CD4-positive, alpha-beta T cell (primary cell): ENCODE measurements at regions of chr2 and their contacts with region 1.

Region 1: DNA sequence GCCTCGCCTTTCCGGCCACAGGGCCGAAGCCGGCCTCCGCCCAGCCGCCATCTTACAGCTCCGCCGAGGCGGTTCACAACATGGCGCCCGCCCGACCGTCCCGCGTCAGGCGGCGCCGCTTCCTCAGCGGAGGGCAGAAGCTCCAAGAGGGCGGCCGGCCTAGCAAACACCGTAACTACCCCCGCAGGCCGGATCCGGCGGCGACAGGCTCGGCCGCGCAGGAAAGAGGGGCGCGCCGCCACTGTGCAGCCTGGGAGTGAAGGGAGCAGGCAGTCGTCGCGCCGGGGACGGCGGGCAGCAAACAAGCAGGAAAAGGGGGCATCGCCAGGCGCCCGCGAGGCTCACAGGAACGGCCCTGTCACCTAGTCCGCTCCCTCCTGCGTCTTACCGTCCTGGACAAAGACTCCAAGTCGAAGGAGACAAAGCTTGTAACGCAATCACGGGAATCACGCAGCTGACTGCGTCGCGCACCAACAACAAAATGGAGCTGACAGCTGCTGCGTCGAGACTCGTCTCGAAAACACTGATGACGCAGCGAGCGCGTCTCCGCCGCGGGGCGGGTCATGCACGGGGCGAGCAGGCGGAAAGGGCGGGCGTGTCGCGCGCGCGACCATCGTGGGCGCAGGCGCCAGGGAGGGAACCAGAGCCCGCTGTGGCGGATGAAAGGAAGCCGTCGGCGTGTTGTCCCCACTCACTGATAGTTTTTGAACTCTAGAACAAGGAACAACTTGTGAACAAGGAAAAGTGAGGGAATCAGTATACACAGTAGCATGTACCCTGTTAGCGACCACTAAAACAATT is at the start of gene CLK1:
- DNase-seq: peak; percentile 95 to 98 (median 97)
- ATAC-seq: peak; percentile 75
- H3K4me3 ChIP-seq: peak within 1 kb of the TSS; percentile 96
- H3K4me3 Mint-ChIP-seq: peak within 1 kb of the TSS; percentile 97
- H3K27ac ChIP-seq: peak within 1 kb of the TSS; percentile 100
- H3K27ac Mint-ChIP-seq: peak within 1 kb of the TSS; percentile 88
- H3K4me1 ChIP-seq: peaks cover 26% of the 10 kb centered on the region
- H3K4me1 Mint-ChIP-seq: peaks cover 48% of the 10 kb centered on the region
- H3K27me3 ChIP-seq: no peaks in the 10 kb centered on the region
- H3K27me3 Mint-ChIP-seq: peaks cover 4% of the 10 kb centered on the region
- CTCF ChIP-seq: no peak
- total RNA-seq, gene CLK1: 1,228 to 1,235 TPM

Region 2: GRCh38 chr2:200850512-200851256 is 13.7 kb before region 1 on chr2:
- CTCF ChIA-PET with region 1: interaction called, 5 read pairs
- POLR2A ChIA-PET with region 1: interaction called, 35 read pairs
- intact Hi-C with region 1: no loop called
- DNase-seq: no peak
- ATAC-seq: no peak
- H3K4me3 ChIP-seq: no peak overlapping the region
- H3K4me3 Mint-ChIP-seq: peak overlapping the region; percentile 20
- H3K27ac ChIP-seq: no peak overlapping the region
- H3K27ac Mint-ChIP-seq: peak overlapping the region; percentile 65
- H3K4me1 ChIP-seq: no peaks in the 10 kb centered on the region
- H3K4me1 Mint-ChIP-seq: peaks cover 21% of the 10 kb centered on the region
- H3K27me3 ChIP-seq: no peaks in the 10 kb centered on the region
- H3K27me3 Mint-ChIP-seq: no peaks in the 10 kb centered on the region
- CTCF ChIP-seq: no peak

Region 3: DNA sequence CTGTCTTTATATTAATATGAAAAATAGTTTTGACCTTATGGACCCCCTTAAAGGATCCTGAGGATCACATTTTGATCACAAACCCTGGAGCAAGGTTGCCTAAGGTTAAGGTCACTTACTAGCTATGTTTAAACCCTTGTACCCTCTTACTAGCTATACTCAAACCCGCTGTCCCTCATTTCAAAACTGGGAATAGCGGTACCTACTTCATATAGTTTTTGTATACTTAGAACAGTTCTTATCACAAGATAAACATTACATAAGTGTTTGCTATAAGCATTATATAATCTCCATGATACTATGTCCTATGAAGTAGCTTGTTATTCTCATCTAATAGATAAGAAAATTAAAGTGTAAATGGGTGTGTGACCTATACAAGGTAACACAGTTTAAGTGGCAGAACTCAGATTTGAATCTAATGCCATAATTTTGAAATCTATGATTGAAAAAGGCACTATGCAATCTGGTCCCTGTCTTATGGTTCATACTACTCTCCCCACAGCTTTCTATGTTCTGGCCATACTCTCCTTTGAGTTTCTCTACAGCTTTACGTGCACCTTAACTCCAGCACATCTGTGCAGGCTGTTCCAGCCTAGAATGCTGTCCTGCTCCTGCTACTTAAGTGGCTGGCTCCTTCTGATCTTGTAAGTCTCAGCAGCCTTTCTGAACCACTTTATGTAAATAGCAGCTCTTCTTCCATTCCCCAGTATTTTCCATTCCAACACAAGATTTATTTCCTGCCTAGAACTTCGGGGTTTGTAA is 176.7 kb after region 1 on chr2:
- CTCF ChIA-PET with region 1: no interaction called
- POLR2A ChIA-PET with region 1: no interaction called
- intact Hi-C with region 1: no loop called
- DNase-seq: no peak
- ATAC-seq: no peak
- H3K4me3 ChIP-seq: no peak overlapping the region
- H3K4me3 Mint-ChIP-seq: no peak overlapping the region
- H3K27ac ChIP-seq: no peak overlapping the region
- H3K27ac Mint-ChIP-seq: no peak overlapping the region
- H3K4me1 ChIP-seq: no peaks in the 10 kb centered on the region
- H3K4me1 Mint-ChIP-seq: peaks cover 10% of the 10 kb centered on the region
- H3K27me3 ChIP-seq: no peaks in the 10 kb centered on the region
- H3K27me3 Mint-ChIP-seq: no peaks in the 10 kb centered on the region
- CTCF ChIP-seq: no peak

Region 4: GRCh38 chr2:201071479-201072200 is 207.3 kb after region 1 on chr2 and contains the starts of genes HYCC2 and NDUFB3:
- CTCF ChIA-PET with region 1: interaction called, 3 read pairs
- POLR2A ChIA-PET with region 1: interaction called, 10 read pairs
- intact Hi-C with region 1: no loop called
- DNase-seq: peak; percentile 85 to 98 (median 90)
- ATAC-seq: peak; percentile 92
- H3K4me3 ChIP-seq: peak within 1 kb of the TSS; percentile 87
- H3K4me3 Mint-ChIP-seq: peak within 1 kb of the TSS; percentile 99
- H3K27ac ChIP-seq: peak within 1 kb of the TSS; percentile 84 to 93
- H3K27ac Mint-ChIP-seq: peak within 1 kb of the TSS; percentile 97
- H3K4me1 ChIP-seq: peaks cover 18% of the 10 kb centered on the region
- H3K4me1 Mint-ChIP-seq: peaks cover 50% of the 10 kb centered on the region
- H3K27me3 ChIP-seq: no peaks in the 10 kb centered on the region
- H3K27me3 Mint-ChIP-seq: no peaks in the 10 kb centered on the region
- CTCF ChIP-seq: peak; percentile 39
- total RNA-seq, gene HYCC2: 29.2 to 30.7 TPM
- total RNA-seq, gene NDUFB3: 10.1 to 13.6 TPM

Region 5: GRCh38 chr2:201130524-201131186 is 266.3 kb after region 1 on chr2:
- CTCF ChIA-PET with region 1: no interaction called
- POLR2A ChIA-PET with region 1: interaction called, 11 read pairs
- intact Hi-C with region 1: no loop called
- DNase-seq: peak in 7 of 14 experiments; percentile 25 to 75 (median 48)
- ATAC-seq: peak; percentile 71
- H3K4me3 ChIP-seq: peak overlapping the region; percentile 25
- H3K4me3 Mint-ChIP-seq: peak overlapping the region; percentile 46
- H3K27ac ChIP-seq: peak overlapping the region; percentile 67 to 69
- H3K27ac Mint-ChIP-seq: peak overlapping the region; percentile 96
- H3K4me1 ChIP-seq: peaks cover 80% of the 10 kb centered on the region
- H3K4me1 Mint-ChIP-seq: peaks cover 78% of the 10 kb centered on the region
- H3K27me3 ChIP-seq: no peaks in the 10 kb centered on the region
- H3K27me3 Mint-ChIP-seq: no peaks in the 10 kb centered on the region
- CTCF ChIP-seq: no peak

Region 6: GRCh38 chr2:201780674-201781581 is 916.6 kb after region 1 on chr2 and contains the start of gene ALS2:
- CTCF ChIA-PET with region 1: no interaction called
- POLR2A ChIA-PET with region 1: interaction called, 15 read pairs
- intact Hi-C with region 1: no loop called
- DNase-seq: peak; percentile 86 to 96 (median 92)
- ATAC-seq: peak; percentile 90
- H3K4me3 ChIP-seq: peak within 1 kb of the TSS; percentile 66
- H3K4me3 Mint-ChIP-seq: peak within 1 kb of the TSS; percentile 98
- H3K27ac ChIP-seq: peak within 1 kb of the TSS; percentile 77 to 88
- H3K27ac Mint-ChIP-seq: peak within 1 kb of the TSS; percentile 93
- H3K4me1 ChIP-seq: peaks cover 15% of the 10 kb centered on the region
- H3K4me1 Mint-ChIP-seq: peaks cover 20% of the 10 kb centered on the region
- H3K27me3 ChIP-seq: no peaks in the 10 kb centered on the region
- H3K27me3 Mint-ChIP-seq: no peaks in the 10 kb centered on the region
- CTCF ChIP-seq: no peak
- total RNA-seq, gene ALS2: 7.0 to 7.2 TPM